MCF 10A (cell line): ENCODE measurements at regions of chr17 and their contacts with region 1.

Region 1: GRCh38 chr17:41930009-41930832 is at the start of gene ODAD4:
- DNase-seq: peak; percentile 96
- H3K4me3 Mint-ChIP-seq: peak within 1 kb of the TSS; percentile 84
- H3K27ac Mint-ChIP-seq: peak within 1 kb of the TSS; percentile 92
- H3K4me1 Mint-ChIP-seq: peaks cover 17% of the 10 kb centered on the region
- H3K27me3 Mint-ChIP-seq: no peaks in the 10 kb centered on the region
- CTCF ChIP-seq: peak; percentile 19
- total RNA-seq, gene ODAD4: 0.96 and 1.3 TPM in 2 replicates

Region 2: DNA sequence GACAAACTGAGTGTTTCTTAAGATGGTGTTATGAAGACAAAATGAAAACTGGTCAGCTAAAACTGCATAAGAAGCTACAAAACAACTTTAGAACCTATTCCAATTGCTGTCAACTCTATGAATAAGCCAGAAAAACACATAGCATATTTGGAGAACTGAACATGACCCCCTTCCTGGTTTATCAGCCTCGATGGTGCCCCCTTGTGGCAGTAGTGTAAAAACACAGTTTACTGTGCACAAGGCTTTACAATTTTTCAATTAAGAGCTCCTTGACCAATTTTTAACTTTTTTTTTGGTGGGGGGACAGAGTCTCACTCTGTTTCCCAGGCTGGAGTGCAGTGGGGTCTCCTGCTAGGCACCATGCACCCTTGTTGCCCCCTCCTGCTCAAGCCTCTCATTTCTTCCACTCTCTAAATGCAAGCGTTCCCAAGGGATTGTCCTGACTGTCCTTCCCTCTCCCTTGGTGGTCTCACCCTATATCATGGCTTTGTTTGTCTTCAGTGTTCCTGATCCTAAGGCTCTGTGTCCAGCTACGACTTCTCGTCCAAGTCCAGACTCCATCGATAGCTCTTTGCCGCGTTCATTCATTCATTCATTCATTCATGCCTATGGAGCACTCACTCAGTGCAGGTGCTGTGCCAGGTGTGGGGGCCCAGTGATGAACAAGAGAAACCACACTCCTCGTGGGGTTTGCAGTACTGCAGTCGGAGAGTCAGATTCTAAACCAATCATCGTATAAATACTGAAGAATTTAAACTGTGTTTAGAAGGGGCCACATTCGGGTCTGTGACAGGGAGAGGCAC is 234.1 kb before region 1 on chr17:
- CTCF ChIA-PET with region 1: no interaction called
- POLR2A ChIA-PET with region 1: no interaction called
- intact Hi-C with region 1: no loop called
- DNase-seq: peak; percentile 94
- H3K4me3 Mint-ChIP-seq: no peak overlapping the region
- H3K27ac Mint-ChIP-seq: no peak overlapping the region
- H3K4me1 Mint-ChIP-seq: no peaks in the 10 kb centered on the region
- H3K27me3 Mint-ChIP-seq: no peaks in the 10 kb centered on the region
- CTCF ChIP-seq: peak; percentile 65

Region 3: GRCh38 chr17:41835800-41836549 is 94.2 kb before region 1 on chr17 and contains the start of gene NT5C3B:
- CTCF ChIA-PET with region 1: no interaction called
- POLR2A ChIA-PET with region 1: no interaction called
- intact Hi-C with region 1: no loop called
- DNase-seq: peak; percentile 32
- H3K4me3 Mint-ChIP-seq: peak within 1 kb of the TSS; percentile 75
- H3K27ac Mint-ChIP-seq: peak within 1 kb of the TSS; percentile 31
- H3K4me1 Mint-ChIP-seq: peaks cover 9% of the 10 kb centered on the region
- H3K27me3 Mint-ChIP-seq: no peaks in the 10 kb centered on the region
- CTCF ChIP-seq: no peak
- total RNA-seq, gene NT5C3B: 59.8 and 65.1 TPM in 2 replicates

Region 4: GRCh38 chr17:41906465-41907184 is 23.6 kb before region 1 on chr17:
- CTCF ChIA-PET with region 1: no interaction called
- POLR2A ChIA-PET with region 1: no interaction called
- intact Hi-C with region 1: no loop called
- DNase-seq: no peak
- H3K4me3 Mint-ChIP-seq: no peak overlapping the region
- H3K27ac Mint-ChIP-seq: no peak overlapping the region
- H3K4me1 Mint-ChIP-seq: peaks cover 9% of the 10 kb centered on the region
- H3K27me3 Mint-ChIP-seq: no peaks in the 10 kb centered on the region
- CTCF ChIP-seq: no peak

Region 5: GRCh38 chr17:41918314-41919164 is 11.7 kb before region 1 on chr17 and contains the start of gene ACLY:
- CTCF ChIA-PET with region 1: no interaction called
- POLR2A ChIA-PET with region 1: interaction called, 101 read pairs
- intact Hi-C with region 1: no loop called
- DNase-seq: peak; percentile 98
- H3K4me3 Mint-ChIP-seq: peak within 1 kb of the TSS; percentile 87
- H3K27ac Mint-ChIP-seq: peak within 1 kb of the TSS; percentile 78
- H3K4me1 Mint-ChIP-seq: peaks cover 30% of the 10 kb centered on the region
- H3K27me3 Mint-ChIP-seq: no peaks in the 10 kb centered on the region
- CTCF ChIP-seq: no peak
- total RNA-seq, gene ACLY: 67.7 and 67.9 TPM in 2 replicates

Region 6: GRCh38 chr17:41948762-41949460 is 18.7 kb after region 1 on chr17:
- CTCF ChIA-PET with region 1: interaction called, 4 read pairs
- POLR2A ChIA-PET with region 1: interaction called, 10 read pairs
- intact Hi-C with region 1: no loop called
- DNase-seq: no peak
- H3K4me3 Mint-ChIP-seq: no peak overlapping the region
- H3K27ac Mint-ChIP-seq: no peak overlapping the region
- H3K4me1 Mint-ChIP-seq: no peaks in the 10 kb centered on the region
- H3K27me3 Mint-ChIP-seq: no peaks in the 10 kb centered on the region
- CTCF ChIP-seq: no peak